Left lung (tissue), 14 donors: ENCODE measurements at regions of chr20 and their contacts with region 1.

Region 1: GRCh38 chr20:39874049-39874888 is 814.8 kb downstream of the MAFB start:
- DNase-seq: peak in 2 of 4 donors; percentile 42 to 68
- ATAC-seq: peak; percentile 93
- H3K4me3 ChIP-seq: no peak overlapping the region
- H3K27ac ChIP-seq: no peak overlapping the region
- H3K4me1 ChIP-seq: no peaks in the 10 kb centered on the region
- H3K27me3 ChIP-seq: no peaks in the 10 kb centered on the region
- CTCF ChIP-seq: peak; percentile 62 to 68

Region 2: GRCh38 chr20:39264506-39265172 is 609.6 kb before region 1 on chr20:
- intact Hi-C with region 1: loop called in 1 of 2 experiments (anchors 5 kb)
- DNase-seq: peak; percentile 39 to 72 (median 42)
- ATAC-seq: peak; percentile 89
- H3K4me3 ChIP-seq: no peak overlapping the region
- H3K27ac ChIP-seq: no peak overlapping the region
- H3K4me1 ChIP-seq: no peaks in the 10 kb centered on the region
- H3K27me3 ChIP-seq: no peaks in the 10 kb centered on the region
- CTCF ChIP-seq: peak; percentile 71 to 91

Region 3: DNA sequence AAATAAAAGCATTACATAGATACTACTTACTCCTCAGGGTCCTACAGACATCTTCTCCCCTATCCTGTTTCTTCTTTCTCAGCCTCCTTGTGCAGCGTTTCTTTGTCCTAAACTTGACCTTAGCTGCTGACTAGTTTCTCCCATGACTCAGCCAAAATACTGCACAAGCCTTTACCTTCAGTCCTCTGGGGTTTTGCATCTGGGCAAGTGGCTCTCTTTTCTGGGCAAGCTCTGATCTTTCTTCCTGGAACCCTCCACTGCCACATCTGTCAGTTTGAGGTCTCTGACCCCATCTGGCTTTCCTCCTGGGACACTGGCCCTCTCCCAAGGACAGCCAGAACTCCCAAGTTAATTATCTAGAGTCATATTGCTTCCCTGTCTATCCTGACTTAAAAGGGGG is 73.7 kb before region 1 on chr20:
- intact Hi-C with region 1: no loop called
- DNase-seq: peak in 1 of 4 donors; percentile 3
- ATAC-seq: peak; percentile 60
- H3K4me3 ChIP-seq: no peak overlapping the region
- H3K27ac ChIP-seq: peak overlapping the region in 1 of 2 donors; percentile 16
- H3K4me1 ChIP-seq: no peaks in the 10 kb centered on the region
- H3K27me3 ChIP-seq: no peaks in the 10 kb centered on the region
- CTCF ChIP-seq: no peak

Region 4: DNA sequence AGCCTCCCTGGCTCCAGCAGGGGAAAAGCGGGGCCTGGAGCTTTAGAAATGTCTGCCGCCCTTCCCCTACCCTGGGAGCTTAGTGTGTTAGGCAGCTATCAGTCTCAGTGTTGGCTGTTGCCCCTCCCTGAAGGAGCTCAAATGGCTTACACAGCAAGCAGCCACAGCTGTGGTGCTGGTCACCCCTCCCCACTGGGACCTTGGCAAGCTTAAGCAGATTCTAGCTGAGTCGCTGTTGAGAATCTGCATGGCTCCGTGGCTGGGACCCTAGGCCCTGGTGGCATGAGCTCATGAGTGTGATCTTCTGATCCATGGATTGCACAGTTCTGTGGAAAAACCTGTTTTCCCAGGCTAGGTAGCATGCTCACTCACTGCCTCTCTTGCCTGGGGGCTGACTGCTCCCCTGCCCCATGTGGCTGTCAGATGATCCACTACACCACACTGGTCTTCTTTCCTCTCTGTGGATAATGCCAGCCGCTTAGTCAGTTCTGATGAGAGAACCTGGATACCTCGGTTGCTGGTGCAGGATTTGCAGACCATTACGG is 100.8 kb after region 1 on chr20:
- intact Hi-C with region 1: no loop called
- DNase-seq: no peak
- ATAC-seq: no peak
- H3K4me3 ChIP-seq: no peak overlapping the region
- H3K27ac ChIP-seq: no peak overlapping the region
- H3K4me1 ChIP-seq: no peaks in the 10 kb centered on the region
- H3K27me3 ChIP-seq: no peaks in the 10 kb centered on the region
- CTCF ChIP-seq: no peak

Region 5: DNA sequence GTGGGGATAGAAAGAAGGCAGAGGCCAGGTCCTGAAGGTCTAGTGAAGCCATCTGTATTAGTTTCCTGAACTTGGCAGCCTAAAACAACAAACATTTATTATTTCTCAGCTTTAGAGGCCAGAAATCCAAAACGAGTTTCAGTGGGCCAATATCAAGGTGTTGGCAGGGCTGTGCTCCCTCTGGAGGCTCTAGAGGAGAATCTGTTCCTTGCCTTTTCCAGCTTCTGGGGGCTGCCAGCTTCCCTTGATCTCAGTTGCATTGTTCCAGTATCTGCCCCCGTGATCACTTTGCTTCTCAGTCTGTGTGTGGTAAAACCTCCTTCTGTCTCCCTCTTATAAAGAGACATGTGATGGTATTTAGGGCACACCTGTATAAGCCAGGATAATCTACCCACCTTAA is 732.4 kb after region 1 on chr20:
- intact Hi-C with region 1: no loop called
- DNase-seq: no peak
- ATAC-seq: no peak
- H3K4me3 ChIP-seq: no peak overlapping the region
- H3K27ac ChIP-seq: no peak overlapping the region
- H3K4me1 ChIP-seq: no peaks in the 10 kb centered on the region
- H3K27me3 ChIP-seq: peaks cover 0 to 11% of the 10 kb centered on the region in 2 donors
- CTCF ChIP-seq: no peak